Kidney (tissue), 22 donors: ENCODE measurements at regions of chr18 and their contacts with region 1.

Region 1: DNA sequence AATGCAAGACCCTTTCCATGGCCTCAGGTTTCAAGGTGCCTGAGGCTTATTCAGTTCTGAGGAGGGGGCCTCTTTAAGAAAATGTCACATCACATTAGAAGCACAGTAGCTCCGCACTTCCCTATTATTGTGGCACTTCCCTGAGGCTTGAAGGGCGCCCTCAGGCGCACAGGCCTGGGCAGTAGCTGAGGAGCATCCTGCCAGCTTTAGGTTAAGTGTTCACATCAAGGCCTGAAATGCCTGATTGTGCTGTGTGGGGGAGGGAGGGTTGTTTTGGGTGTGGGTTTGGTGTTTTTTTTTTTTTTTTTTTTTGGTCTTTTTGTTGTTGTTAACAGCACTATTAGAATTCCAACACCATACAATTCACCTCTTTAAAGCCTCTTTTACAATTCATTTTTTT is 107.9 kb downstream of the CABLES1 start:
- DNase-seq: no peak
- H3K4me3 ChIP-seq: no peak overlapping the region
- H3K27ac ChIP-seq: no peak overlapping the region
- H3K4me1 ChIP-seq: peaks cover 0 to 8% (median 6%) of the 10 kb centered on the region in 3 donors
- H3K27me3 ChIP-seq: no peaks in the 10 kb centered on the region
- CTCF ChIP-seq: no peak

Region 2: DNA sequence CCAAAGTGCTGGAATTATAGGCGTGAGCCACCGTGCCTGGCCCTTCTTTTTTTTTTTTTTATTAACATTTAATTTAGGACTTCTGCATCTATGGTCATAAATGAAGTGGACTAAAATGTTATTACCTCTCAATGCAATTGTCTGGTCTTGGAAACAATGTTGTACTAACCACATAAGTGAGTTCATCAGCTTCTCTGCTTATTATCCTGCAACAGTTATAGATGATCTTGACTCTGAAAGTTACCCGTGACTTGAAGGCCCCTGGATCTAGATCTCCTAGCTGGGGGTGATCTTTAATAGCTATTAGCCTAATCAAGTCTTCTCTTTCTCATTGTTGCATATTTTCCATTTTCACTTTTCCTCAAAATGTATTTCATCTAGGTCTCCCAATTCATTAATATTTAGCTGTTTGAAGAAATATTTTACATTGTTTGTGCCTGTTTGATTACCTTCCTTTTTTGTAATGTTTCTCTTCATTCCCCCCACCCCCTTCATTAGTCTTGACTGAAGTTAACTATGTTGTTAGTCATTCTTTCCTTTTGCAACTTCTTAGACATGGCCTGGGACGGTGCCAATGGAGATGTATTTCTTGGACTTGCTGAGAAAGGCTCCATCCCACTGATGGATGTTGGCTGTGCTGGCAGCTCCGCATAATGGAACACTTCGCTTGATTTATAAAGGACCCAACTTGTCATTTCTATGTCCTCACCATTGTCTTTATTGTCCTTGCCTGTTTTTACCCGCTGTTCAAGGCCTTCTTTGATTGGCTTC is 68.4 kb after region 1 on chr18:
- intact Hi-C with region 1: loop called (anchors 10 kb)
- DNase-seq: peak in 4 of 5 donors; percentile 24 to 86 (median 62)
- H3K4me3 ChIP-seq: no peak overlapping the region
- H3K27ac ChIP-seq: peak overlapping the region; percentile 9 to 64
- H3K4me1 ChIP-seq: peaks cover 0 to 12% (median 10%) of the 10 kb centered on the region in 3 donors
- H3K27me3 ChIP-seq: no peaks in the 10 kb centered on the region
- CTCF ChIP-seq: no peak

Region 3: GRCh38 chr18:23356915-23357601 is 113.9 kb after region 1 on chr18:
- intact Hi-C with region 1: loop called (anchors 10 kb)
- DNase-seq: peak in 2 of 5 donors; percentile 36 to 80
- H3K4me3 ChIP-seq: peak overlapping the region in 1 of 3 donors; percentile 12
- H3K27ac ChIP-seq: peak overlapping the region; percentile 63 to 82
- H3K4me1 ChIP-seq: peaks cover 8 to 28% (median 24%) of the 10 kb centered on the region in 3 donors
- H3K27me3 ChIP-seq: no peaks in the 10 kb centered on the region
- CTCF ChIP-seq: no peak